ENCODE measurements at regions of chr10 and their contacts with region 1.

Region 1: DNA sequence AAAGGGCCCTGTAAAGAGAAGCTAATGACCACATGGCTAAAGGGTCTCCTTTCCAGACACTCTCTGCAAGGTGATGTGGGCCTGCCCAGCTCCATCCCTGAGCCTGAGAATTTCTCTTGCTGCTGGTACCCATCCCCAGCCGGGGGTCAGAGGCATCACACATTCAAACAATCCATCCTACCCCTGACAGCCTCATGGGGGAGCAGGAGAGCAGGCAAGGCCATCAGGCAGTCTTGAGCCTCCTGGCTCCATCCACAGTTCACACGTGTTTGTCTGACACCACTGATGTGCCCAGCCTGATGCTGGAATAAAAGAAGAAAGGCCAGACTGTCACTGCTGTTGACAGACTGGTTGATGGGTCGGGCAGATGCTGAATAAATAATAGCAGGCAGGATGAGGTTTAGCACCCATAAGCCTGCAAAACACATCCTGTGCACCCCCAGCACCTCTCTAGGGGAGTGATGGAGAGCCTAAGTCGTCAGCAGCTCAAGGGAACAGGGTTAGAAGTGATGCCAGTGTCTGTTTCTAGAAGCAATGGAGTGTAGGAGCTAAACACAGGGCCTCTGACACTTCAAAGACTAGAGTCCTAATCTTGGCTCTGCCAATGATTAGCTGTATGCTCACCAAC is 43.5 kb downstream of the TLL2 start:
- DNase-seq: peak in 1 of 2 experiments; percentile 84
- H3K4me3 ChIP-seq: no peak overlapping the region
- H3K27ac ChIP-seq: no peak overlapping the region
- H3K4me1 ChIP-seq: peaks cover 2 to 6% (median 4%) of the 10 kb centered on the region in 4 experiments; a peak in 4 of 7 replicates
- H3K27me3 ChIP-seq: no peaks in the 10 kb centered on the region
- CTCF ChIP-seq: peak; percentile 82 to 94 (median 94)
- EP300 ChIP-seq: no peak
- POLR2A ChIP-seq: no peak
- RAD21 ChIP-seq: peak; percentile 56 to 76

Region 2: DNA sequence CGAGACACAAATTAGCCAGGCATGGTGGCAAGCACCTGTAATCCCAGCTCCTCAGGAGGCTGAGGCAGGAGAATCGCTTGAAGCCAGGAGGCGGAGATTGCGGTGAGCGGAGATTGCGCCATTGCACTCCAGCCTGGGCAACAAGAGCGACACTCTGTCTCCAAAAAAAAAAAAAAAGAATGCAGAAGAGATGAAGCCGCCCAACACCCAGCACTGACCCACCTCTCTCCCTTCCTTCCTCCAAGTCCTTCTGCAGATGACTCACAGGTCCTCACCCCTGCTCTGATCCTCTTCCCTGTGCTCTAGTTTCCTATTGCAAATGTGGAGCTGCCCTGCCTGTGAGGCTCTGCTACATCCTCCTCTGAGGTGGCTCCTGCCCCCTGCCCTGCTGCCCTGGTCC is 89.4 kb before region 1 on chr10:
- CTCF ChIA-PET with region 1: interaction called, 14 read pairs
- POLR2A ChIA-PET with region 1: no interaction called
- DNase-seq: no peak
- H3K4me3 ChIP-seq: no peak overlapping the region
- H3K27ac ChIP-seq: no peak overlapping the region
- H3K4me1 ChIP-seq: peaks cover 0 to 5% (median 0%) of the 10 kb centered on the region in 4 experiments; a peak in 2 of 7 replicates
- H3K27me3 ChIP-seq: no peaks in the 10 kb centered on the region
- CTCF ChIP-seq: no peak
- EP300 ChIP-seq: no peak
- POLR2A ChIP-seq: no peak
- RAD21 ChIP-seq: no peak

Region 3: DNA sequence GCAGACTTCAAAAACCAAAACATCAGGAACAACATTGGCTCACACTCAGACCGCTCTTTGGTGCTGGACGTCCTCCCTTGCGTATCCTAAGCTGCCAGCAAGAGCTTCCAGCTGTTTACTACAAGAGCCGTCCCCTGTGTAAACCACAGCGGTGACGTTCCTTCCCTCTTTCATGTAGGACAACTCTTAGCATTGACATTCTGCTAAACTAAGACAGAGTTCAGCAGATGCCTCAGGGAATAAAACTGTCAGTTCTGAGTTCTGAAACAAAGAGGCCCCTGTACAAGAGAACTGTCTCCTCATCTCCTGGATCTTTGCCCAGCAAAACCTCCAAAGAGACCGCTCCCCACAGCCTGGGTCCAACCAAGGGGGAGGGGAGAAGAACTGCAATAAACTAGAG is 53.6 kb before region 1 on chr10:
- CTCF ChIA-PET with region 1: interaction called, 21 read pairs
- POLR2A ChIA-PET with region 1: no interaction called
- DNase-seq: peak in 1 of 2 experiments; percentile 27
- H3K4me3 ChIP-seq: no peak overlapping the region
- H3K27ac ChIP-seq: no peak overlapping the region
- H3K4me1 ChIP-seq: no peaks in the 10 kb centered on the region
- H3K27me3 ChIP-seq: no peaks in the 10 kb centered on the region
- CTCF ChIP-seq: no peak
- EP300 ChIP-seq: no peak
- POLR2A ChIP-seq: no peak
- RAD21 ChIP-seq: no peak

Region 4: DNA sequence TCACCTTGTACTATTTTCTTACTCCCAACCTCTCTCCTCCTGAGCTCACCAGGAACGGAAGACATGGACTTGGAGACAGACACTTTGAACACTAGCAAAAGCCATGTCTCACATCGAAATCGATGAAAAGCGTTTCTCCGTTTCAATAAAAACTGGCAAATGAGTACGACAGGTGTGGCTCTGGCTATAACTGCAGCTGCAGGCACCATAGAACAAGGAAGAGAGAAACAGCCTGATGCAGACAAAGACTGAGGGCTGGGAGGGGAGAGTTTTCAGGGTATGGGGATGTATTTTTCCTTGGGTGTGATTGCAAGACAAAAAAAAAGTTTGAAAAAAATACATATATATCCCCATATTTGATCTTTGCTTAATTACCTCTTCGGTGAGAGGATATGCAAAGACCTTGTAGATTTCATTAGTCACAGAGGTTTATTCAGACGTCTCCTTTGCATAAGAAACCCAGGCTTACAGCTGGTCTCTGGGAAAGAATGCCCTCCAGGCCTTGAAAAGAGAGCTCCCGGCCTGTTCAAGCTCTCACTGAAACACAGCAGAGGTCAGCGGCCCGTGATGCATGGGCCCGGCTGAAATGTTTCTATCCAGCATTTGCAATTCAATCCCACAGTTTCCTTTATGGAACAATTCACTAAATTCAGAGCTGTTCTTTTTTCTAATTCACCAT is 19.6 kb before region 1 on chr10:
- CTCF ChIA-PET with region 1: interaction called, 31 read pairs
- POLR2A ChIA-PET with region 1: interaction called, 3 read pairs
- DNase-seq: peak; percentile 52 to 62
- H3K4me3 ChIP-seq: peak overlapping the region in 1 of 4 experiments; percentile 44; a peak in 2 of 8 replicates
- H3K27ac ChIP-seq: peak overlapping the region; percentile 84
- H3K4me1 ChIP-seq: peaks cover 25 to 34% (median 30%) of the 10 kb centered on the region in 4 experiments
- H3K27me3 ChIP-seq: no peaks in the 10 kb centered on the region
- CTCF ChIP-seq: no peak
- EP300 ChIP-seq: no peak
- POLR2A ChIP-seq: 0 out of 3 replicates have a peak, but pooled peaks of 1 of the 2 experiments have one; percentile 39
- RAD21 ChIP-seq: no peak

Region 5: DNA sequence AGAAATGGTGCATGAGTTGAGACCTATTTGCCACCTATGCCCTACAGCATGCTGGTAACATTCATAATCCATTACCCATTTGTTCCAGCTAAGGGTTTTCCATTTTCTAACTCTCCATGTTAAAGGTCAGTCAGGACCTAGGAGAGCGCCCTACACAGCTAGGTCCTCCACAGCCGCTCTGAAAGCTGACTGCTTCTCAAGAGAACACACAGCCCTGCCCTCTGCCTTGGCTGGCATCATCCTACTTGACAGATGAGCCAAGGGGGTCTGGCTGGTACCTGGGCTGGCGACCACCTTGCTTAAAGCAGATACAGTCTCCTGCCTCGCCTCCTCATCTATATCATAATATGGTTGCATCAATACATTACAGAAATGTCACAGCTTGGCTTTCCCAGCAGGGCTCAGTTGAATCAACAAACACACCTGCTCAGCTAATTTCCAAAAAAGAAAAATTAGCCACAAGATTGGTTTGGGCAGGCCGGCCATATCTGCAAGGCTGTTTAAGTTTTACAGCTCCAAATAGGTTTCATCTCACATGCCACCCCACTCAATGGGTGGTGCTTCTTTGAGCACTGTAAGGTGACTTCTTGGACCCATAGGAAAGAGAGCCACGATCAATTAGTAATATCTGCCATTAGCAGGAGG is 26.2 kb after region 1 on chr10:
- CTCF ChIA-PET with region 1: interaction called, 32 read pairs
- POLR2A ChIA-PET with region 1: no interaction called
- DNase-seq: peak in 1 of 2 experiments; percentile 61
- H3K4me3 ChIP-seq: no peak overlapping the region
- H3K27ac ChIP-seq: no peak overlapping the region
- H3K4me1 ChIP-seq: peaks cover 0 to 3% (median 0%) of the 10 kb centered on the region in 4 experiments; a peak in 1 of 7 replicates
- H3K27me3 ChIP-seq: no peaks in the 10 kb centered on the region
- CTCF ChIP-seq: no peak
- EP300 ChIP-seq: no peak
- POLR2A ChIP-seq: no peak
- RAD21 ChIP-seq: no peak